ENCODE measurements at regions of chr16 and their contacts with region 1.

Region 1: DNA sequence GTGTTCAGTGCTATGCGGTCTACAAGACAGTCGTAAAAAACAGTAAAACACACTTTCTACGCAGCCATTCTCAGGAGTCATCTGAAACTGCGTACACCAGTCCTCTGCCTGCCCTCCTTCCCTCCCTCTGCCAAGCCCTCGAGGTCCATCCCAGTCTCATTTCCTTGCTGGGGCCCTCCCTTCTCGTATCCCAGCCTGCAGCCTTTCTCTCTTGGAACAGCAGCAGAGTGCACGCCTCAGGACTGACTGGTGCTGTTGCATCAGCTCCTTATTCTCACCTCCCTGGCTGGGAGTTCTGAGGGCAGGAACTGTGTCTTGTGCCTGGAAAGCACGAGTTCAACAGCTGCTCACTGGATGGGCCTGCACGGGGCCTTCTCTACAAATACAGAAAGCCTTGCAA is 12.5 kb downstream of the FAHD1 start:
- DNase-seq: no peak
- H3K4me3 ChIP-seq: no peak overlapping the region
- H3K27ac ChIP-seq: no peak overlapping the region
- H3K4me1 ChIP-seq: no peaks in the 10 kb centered on the region
- H3K27me3 ChIP-seq: no peaks in the 10 kb centered on the region
- CTCF ChIP-seq: no peak

Region 2: GRCh38 chr16:1794221-1794860 is 45.2 kb before region 1 on chr16:
- CTCF ChIA-PET with region 1: no interaction called
- POLR2A ChIA-PET with region 1: no interaction called
- intact Hi-C with region 1: no loop called
- DNase-seq: no peak
- H3K4me3 ChIP-seq: no peak overlapping the region
- H3K27ac ChIP-seq: no peak overlapping the region
- H3K4me1 ChIP-seq: no peaks in the 10 kb centered on the region
- H3K27me3 ChIP-seq: no peaks in the 10 kb centered on the region
- CTCF ChIP-seq: no peak

Region 3: GRCh38 chr16:1863681-1864460 is 24.3 kb after region 1 on chr16:
- CTCF ChIA-PET with region 1: interaction called, 10 read pairs
- POLR2A ChIA-PET with region 1: no interaction called
- intact Hi-C with region 1: no loop called
- DNase-seq: peak in 1 of 2 experiments; percentile 11
- H3K4me3 ChIP-seq: no peak overlapping the region
- H3K27ac ChIP-seq: no peak overlapping the region
- H3K4me1 ChIP-seq: 0 out of 2 replicates have a peak, but pooled peaks cover under 1% of the 10 kb centered on the region
- H3K27me3 ChIP-seq: peaks cover 2% of the 10 kb centered on the region; the same call in 1 of the 2 replicates
- CTCF ChIP-seq: peak; percentile 80

Measured in PC-9 (cell line).